ENCODE measurements at regions of chr18 and their contacts with region 1.

Region 1: DNA sequence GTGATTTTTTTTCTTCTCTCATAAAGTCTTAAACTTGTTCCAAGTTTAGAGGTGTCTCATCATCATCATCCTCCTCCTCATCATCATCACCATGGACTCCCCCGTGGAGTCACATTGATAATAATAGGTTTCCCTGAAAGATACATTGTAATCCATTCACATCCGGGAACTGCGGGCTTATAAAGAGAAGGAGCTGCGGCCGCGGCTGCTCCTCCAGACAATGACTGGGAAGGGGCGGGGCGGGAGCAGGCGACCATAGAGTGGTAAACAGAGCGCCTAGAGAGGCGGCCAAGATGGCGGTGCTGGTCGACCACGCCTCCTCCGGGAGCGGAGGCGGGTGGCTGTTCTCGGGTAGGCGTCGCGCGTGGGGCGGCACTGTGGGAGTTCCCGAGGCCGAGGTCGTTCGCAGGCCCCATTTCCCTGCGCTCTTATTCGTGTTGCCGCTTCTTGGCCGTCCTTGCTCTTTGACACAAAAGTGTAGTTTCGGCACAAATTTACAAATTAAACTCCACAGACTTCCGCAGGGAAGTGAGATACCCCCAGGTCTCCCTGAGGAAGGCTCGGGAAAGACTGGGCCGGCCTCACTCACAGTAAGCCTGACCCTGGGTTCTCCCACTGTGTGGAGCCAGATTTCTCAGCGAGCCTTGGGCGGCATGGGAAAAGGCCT is 1.8 kb upstream of the TCF4 start:
- DNase-seq: peak; percentile 91 to 95 (median 91)
- ATAC-seq: peak; percentile 97
- H3K4me3 ChIP-seq: peak overlapping the region; percentile 3
- H3K4me1 ChIP-seq: no peaks in the 10 kb centered on the region
- CTCF ChIP-seq: no peak

Region 2: DNA sequence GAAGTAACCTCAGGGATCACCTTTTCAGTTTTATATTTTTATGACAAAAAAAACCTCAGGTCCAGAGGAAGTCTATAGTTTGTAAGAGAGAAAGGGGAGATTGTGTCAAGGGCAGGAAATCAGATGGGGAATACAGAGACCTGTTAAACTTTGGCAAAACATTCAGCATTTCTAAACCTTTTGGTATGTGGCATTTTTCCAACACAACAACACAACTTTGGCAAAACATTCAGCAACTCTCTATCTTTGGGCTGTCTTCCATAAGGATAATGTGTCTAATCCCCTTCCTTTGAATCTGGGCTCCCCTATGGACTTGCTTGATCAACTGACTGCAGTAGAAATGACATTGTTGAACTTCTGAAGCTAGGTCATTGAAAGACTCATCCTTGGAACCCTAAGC is 409.9 kb before region 1 on chr18:
- intact Hi-C with region 1: no loop called
- DNase-seq: no peak
- ATAC-seq: no peak
- H3K4me3 ChIP-seq: no peak overlapping the region
- H3K4me1 ChIP-seq: no peaks in the 10 kb centered on the region
- CTCF ChIP-seq: no peak

Region 3: GRCh38 chr18:55422456-55423180 is 167.1 kb before region 1 on chr18:
- intact Hi-C with region 1: loop called (anchors 10 kb)
- DNase-seq: peak in 2 of 3 donors; percentile 28 to 40
- ATAC-seq: no peak
- H3K4me3 ChIP-seq: no peak overlapping the region
- H3K4me1 ChIP-seq: no peaks in the 10 kb centered on the region
- CTCF ChIP-seq: no peak

Region 4: DNA sequence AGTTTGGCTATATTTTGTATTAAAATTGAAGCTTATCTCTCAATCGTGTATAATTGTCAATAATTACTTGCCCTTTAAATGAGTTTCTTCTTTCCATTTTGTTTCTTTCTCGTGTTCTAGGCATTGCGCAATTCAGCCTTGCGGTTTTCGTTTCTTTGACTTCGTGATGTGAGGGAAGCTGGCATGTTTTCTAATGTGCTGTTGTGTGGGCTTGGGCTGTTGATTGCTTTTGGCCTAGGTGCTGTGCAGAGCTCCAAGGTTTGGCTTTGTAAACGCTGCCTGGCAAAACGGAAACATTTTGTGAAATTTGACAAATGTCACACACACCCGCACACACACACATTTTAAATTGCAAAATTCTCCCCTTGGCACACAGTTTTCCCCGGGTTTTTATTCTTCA is 240.8 kb after region 1 on chr18:
- intact Hi-C with region 1: no loop called
- DNase-seq: peak in 1 of 3 donors; percentile 9
- ATAC-seq: no peak
- H3K4me3 ChIP-seq: no peak overlapping the region
- H3K4me1 ChIP-seq: no peaks in the 10 kb centered on the region
- CTCF ChIP-seq: no peak

Measured in mucosa of descending colon (tissue), 3 donors.